Natural killer cell (primary cell): ENCODE measurements at regions of chr6 and their contacts with region 1.

Region 1: DNA sequence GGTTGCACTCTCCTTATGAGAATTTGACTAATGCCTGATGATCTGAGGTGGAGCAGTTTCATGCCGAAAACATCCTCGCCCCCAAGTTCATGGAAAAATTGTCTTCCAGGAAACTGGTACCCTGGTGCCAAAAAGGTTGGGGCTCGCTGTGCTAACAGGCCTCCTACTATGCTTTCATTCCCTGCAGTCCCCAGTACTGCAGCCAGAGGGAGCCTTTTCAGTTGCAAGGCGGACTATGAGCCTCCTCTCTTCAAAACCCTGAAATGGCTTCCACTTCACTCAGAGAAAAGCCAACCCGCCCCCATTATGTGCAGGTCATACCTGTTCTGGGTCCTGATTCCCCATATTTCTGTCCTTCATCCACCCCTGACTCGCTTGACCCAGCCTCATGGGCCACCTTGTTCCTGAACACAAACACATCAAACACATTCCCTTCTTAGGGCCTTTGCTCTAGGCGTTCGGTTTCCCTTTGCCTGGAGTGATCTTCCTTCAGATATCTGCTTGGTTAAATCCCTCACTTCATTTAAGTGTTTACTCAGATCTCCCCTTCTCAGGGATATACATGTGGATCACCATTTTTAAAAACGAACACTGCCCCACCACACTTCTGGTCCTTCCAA is 173.7 kb downstream of the PHACTR1 start:
- DNase-seq: peak in 1 of 2 donors; percentile 16
- ATAC-seq: peak in 1 of 3 donors; percentile 52
- H3K4me3 ChIP-seq: no peak overlapping the region
- H3K4me3 Mint-ChIP-seq: no peak overlapping the region
- H3K27ac ChIP-seq: no peak overlapping the region
- H3K27ac Mint-ChIP-seq: no peak overlapping the region
- H3K4me1 ChIP-seq: no peaks in the 10 kb centered on the region
- H3K4me1 Mint-ChIP-seq: no peaks in the 10 kb centered on the region
- H3K27me3 ChIP-seq: no peaks in the 10 kb centered on the region
- H3K27me3 Mint-ChIP-seq: peaks cover 7 to 11% of the 10 kb centered on the region in 2 donors
- CTCF ChIP-seq: peak; percentile 56

Region 2: DNA sequence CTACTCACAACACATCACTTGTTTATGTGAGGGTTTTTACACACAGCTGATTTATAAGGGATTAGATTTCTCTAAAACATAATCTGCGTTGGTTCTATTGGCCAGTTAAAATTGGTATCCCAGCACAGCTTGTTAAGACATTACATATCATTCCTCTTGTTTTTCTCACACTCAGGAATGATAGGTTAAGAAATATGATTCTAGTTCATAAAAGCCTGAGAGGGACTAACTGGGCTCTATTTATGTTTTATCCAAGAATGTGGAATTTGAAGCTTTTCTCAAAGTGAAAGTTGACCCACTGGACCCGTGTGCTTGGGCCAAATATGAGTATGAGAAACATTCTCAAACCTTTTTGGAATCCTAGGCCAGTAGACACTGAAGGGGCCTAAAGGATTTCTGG is 1235.4 kb before region 1 on chr6:
- intact Hi-C with region 1: loop called (anchors 1 kb)
- DNase-seq: no peak
- ATAC-seq: no peak
- H3K4me3 ChIP-seq: no peak overlapping the region
- H3K4me3 Mint-ChIP-seq: no peak overlapping the region
- H3K27ac ChIP-seq: no peak overlapping the region
- H3K27ac Mint-ChIP-seq: no peak overlapping the region
- H3K4me1 ChIP-seq: no peaks in the 10 kb centered on the region
- H3K4me1 Mint-ChIP-seq: no peaks in the 10 kb centered on the region
- H3K27me3 ChIP-seq: no peaks in the 10 kb centered on the region
- H3K27me3 Mint-ChIP-seq: peaks cover 11 to 14% of the 10 kb centered on the region in 2 donors
- CTCF ChIP-seq: no peak

Region 3: DNA sequence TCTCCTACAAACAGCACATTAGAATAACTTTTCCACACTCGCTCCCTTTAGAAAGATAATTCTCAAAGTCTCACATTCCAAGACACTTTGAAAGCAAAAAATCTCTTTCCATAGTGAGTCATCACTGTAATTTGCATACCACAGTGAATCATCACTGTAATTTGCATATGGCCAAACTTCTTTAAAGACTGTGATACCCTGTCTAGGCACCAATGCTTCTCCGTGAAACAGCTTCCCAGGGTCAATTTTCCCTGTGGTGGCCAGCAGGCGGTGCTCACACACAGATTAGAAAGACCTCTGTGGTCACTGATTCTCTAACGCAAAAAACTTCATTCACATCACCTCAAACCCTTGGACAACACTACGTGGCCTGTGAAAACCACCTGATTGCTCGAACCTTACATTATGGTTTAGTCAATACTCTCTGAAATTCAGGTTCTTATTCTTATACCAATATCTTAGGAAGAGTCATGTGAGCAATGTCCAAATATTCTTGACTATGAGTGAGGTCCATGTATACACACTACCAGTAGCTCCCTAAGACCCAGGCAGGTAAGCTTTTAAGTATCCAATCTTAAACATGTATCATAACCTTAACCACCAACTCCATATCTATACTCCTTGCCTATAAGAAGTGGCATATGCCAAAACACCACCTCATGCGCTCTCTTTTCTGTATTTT is 252.2 kb before region 1 on chr6:
- intact Hi-C with region 1: loop called (anchors 10 kb)
- DNase-seq: peak in 1 of 2 donors; percentile 28
- ATAC-seq: peak in 1 of 3 donors; percentile 48
- H3K4me3 ChIP-seq: no peak overlapping the region
- H3K4me3 Mint-ChIP-seq: no peak overlapping the region
- H3K27ac ChIP-seq: no peak overlapping the region
- H3K27ac Mint-ChIP-seq: no peak overlapping the region
- H3K4me1 ChIP-seq: no peaks in the 10 kb centered on the region
- H3K4me1 Mint-ChIP-seq: no peaks in the 10 kb centered on the region
- H3K27me3 ChIP-seq: no peaks in the 10 kb centered on the region
- H3K27me3 Mint-ChIP-seq: peaks cover 2 to 20% of the 10 kb centered on the region in 2 donors
- CTCF ChIP-seq: no peak

Region 4: DNA sequence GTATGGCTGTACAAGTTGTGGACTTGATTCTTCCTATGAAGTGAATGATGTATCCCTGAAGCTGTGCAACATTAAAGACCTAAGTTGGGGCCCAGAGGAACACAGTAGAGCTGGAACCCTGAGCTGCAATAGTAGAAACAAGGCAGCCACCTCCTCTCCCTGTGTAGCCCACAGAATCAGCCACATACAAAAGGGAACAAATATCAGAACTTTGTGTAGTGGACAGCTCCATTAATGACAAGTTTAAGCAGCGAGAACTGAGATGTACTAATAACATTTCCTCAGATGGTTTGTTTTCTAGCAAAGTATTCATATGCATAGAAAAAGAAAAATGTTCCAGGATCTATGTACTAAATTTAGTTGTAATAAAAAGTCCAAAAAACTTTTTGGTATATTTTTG is 154.5 kb before region 1 on chr6:
- intact Hi-C with region 1: no loop called
- DNase-seq: no peak
- ATAC-seq: no peak
- H3K4me3 ChIP-seq: no peak overlapping the region
- H3K4me3 Mint-ChIP-seq: no peak overlapping the region
- H3K27ac ChIP-seq: no peak overlapping the region
- H3K27ac Mint-ChIP-seq: no peak overlapping the region
- H3K4me1 ChIP-seq: no peaks in the 10 kb centered on the region
- H3K4me1 Mint-ChIP-seq: no peaks in the 10 kb centered on the region
- H3K27me3 ChIP-seq: no peaks in the 10 kb centered on the region
- H3K27me3 Mint-ChIP-seq: peaks cover 0 to 2% of the 10 kb centered on the region in 2 donors
- CTCF ChIP-seq: no peak